Activated CD4-positive, alpha-beta T cell treated with anti-CD3 and anti-CD28 coated beads for 36 hours (primary cell): ENCODE measurements at regions of chr13 and their contacts with region 1.

Region 1: DNA sequence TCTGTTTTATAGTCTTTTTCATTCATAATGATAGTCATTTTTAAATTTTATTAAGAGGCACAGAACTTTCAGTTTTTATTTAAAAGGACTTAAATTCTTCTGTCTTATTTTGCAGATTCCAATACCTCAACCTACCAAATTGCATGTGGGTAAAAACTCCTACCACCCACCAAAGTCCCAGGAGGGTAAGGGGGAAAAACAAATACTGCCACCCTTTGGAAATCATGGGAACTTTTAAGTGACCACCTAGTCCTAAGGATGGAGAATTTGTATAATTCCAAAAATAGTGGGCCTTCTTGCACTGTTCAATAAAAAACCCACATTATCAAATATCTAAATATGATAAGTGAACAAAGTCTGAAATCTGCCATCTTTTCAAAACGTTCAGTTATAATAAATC is 9.7 kb downstream of the SUPT20H start:
- DNase-seq: no peak
- ATAC-seq: no peak
- H3K4me3 Mint-ChIP-seq: no peak overlapping the region
- H3K27ac Mint-ChIP-seq: no peak overlapping the region
- H3K4me1 Mint-ChIP-seq: peaks cover 30% of the 10 kb centered on the region
- H3K27me3 Mint-ChIP-seq: no peaks in the 10 kb centered on the region

Region 2: DNA sequence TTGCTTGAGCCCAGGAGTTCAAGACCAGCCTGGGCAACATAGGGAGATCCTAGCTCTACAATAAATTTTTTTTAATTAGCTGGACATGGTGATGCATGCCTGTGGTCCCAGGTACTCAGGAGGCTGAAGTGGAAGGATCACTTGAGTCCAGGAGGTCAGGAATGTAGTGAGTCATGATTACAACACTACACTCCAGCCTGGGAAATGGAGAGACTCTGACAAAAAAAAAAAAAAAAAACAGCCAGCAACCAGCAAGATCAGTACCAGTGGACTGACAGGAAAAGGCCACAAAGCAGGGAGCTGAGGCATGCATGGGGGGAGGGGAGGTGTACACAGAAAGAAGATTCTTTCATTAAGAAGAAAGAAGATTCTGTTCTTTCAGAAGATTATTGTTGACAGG is 283.5 kb before region 1 on chr13:
- CTCF ChIA-PET with region 1: no interaction called
- POLR2A ChIA-PET with region 1: no interaction called
- intact Hi-C with region 1: no loop called
- DNase-seq: no peak
- ATAC-seq: no peak
- H3K4me3 Mint-ChIP-seq: no peak overlapping the region
- H3K27ac Mint-ChIP-seq: no peak overlapping the region
- H3K4me1 Mint-ChIP-seq: no peaks in the 10 kb centered on the region
- H3K27me3 Mint-ChIP-seq: peaks cover 8% of the 10 kb centered on the region

Region 3: DNA sequence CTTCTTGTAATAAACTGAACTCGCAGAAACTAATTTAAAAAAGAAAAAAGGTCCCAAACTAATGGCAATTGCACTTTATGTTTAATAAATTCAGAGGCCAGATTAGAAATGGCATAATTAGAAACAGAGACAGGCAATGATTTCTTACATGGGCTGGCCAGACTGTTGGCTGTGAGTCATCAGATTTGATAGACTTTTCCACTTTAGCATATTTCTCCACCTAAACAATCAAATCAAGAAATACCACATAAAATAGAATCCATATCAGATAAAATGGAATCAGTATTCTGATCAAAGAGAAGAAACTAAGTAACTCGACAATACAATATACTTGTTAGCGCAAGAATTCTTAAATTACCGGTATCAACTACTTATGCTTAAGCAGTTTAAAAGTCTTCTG is 20.2 kb before region 1 on chr13:
- CTCF ChIA-PET with region 1: interaction called, 19 read pairs
- POLR2A ChIA-PET with region 1: no interaction called
- intact Hi-C with region 1: loop called in 1 of 2 experiments (anchors 2 kb)
- DNase-seq: no peak
- ATAC-seq: no peak
- H3K4me3 Mint-ChIP-seq: no peak overlapping the region
- H3K27ac Mint-ChIP-seq: no peak overlapping the region
- H3K4me1 Mint-ChIP-seq: peaks cover 4% of the 10 kb centered on the region
- H3K27me3 Mint-ChIP-seq: no peaks in the 10 kb centered on the region

Region 4: DNA sequence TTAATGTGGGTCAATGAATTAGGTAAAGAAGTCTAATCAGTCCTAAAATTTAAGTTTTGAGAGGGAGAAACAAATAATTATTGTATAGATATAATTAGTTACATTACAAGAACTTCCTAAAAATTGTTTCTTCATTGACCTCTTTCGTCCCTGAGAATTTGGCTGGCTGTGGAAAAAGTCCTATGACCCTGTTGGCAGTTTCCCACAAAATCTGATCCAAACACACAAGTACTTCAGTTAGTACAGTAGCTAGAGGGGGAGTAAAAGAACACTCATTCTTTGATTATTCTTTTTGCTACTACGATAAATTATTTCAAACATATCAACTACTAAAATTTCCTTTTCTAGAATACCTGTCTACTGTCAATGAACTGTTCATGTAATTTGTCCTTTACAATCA is 537.4 kb after region 1 on chr13:
- CTCF ChIA-PET with region 1: no interaction called
- POLR2A ChIA-PET with region 1: no interaction called
- intact Hi-C with region 1: no loop called
- DNase-seq: no peak
- ATAC-seq: no peak
- H3K4me3 Mint-ChIP-seq: no peak overlapping the region
- H3K27ac Mint-ChIP-seq: no peak overlapping the region
- H3K4me1 Mint-ChIP-seq: no peaks in the 10 kb centered on the region
- H3K27me3 Mint-ChIP-seq: no peaks in the 10 kb centered on the region